ENCODE measurements at regions of chr11 and their contacts with region 1.

Region 1: GRCh38 chr11:118689851-118690552 is 10.6 kb upstream of the TREH start:
- DNase-seq: peak; percentile 93 to 95
- ATAC-seq: peak; percentile 94 to 98 (median 96)
- H3K4me3 ChIP-seq: peak overlapping the region in 9 of 10 donors; percentile 29 to 55 (median 49)
- H3K27ac ChIP-seq: peak overlapping the region in 9 of 10 donors; percentile 14 to 81 (median 75)
- H3K4me1 ChIP-seq: peaks cover 0 to 29% (median 8%) of the 10 kb centered on the region in 9 donors
- H3K27me3 ChIP-seq: no peaks in the 10 kb centered on the region
- CTCF ChIP-seq: peak; percentile 70 to 91 (median 84)

Region 2: DNA sequence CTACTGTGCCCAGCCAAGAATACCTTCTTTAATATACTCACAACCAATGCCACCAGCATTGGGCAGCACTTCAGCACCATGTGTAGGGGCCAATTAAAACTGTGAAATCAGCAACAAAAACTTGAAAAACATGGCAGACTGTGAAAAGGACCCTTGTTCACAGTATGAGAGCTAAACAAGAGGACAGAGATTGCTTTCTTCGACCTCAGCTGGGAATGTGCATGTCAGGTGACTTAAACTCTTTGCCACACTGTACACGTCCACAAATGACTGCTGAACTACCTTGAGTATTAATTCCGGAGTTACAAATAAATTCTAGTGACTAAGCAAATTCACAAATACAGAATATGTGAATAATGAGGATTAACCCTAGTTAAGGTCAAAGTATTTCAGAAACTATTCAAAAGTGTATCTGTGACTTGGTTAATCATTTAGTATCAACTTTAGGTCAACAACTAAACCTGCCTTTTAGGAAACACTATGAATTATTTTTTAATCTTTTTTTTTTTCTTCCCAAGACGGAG is 67.9 kb after region 1 on chr11:
- intact Hi-C with region 1: no loop called
- DNase-seq: no peak
- ATAC-seq: no peak
- H3K4me3 ChIP-seq: no peak overlapping the region
- H3K27ac ChIP-seq: peak overlapping the region in 1 of 10 donors; percentile 11
- H3K4me1 ChIP-seq: peaks cover 0 to 6% (median under 1%) of the 10 kb centered on the region in 9 donors
- H3K27me3 ChIP-seq: no peaks in the 10 kb centered on the region
- CTCF ChIP-seq: no peak

Region 3: GRCh38 chr11:118783724-118784495 is 93.9 kb after region 1 on chr11:
- intact Hi-C with region 1: loop called in 3 of 10 experiments (anchors 5 to 10 kb)
- DNase-seq: peak; percentile 47 to 57
- ATAC-seq: peak; percentile 34 to 87 (median 70)
- H3K4me3 ChIP-seq: no peak overlapping the region
- H3K27ac ChIP-seq: peak overlapping the region in 2 of 10 donors; percentile 4 to 25
- H3K4me1 ChIP-seq: peaks cover 5 to 91% (median 80%) of the 10 kb centered on the region in 9 donors
- H3K27me3 ChIP-seq: no peaks in the 10 kb centered on the region
- CTCF ChIP-seq: no peak

Region 4: DNA sequence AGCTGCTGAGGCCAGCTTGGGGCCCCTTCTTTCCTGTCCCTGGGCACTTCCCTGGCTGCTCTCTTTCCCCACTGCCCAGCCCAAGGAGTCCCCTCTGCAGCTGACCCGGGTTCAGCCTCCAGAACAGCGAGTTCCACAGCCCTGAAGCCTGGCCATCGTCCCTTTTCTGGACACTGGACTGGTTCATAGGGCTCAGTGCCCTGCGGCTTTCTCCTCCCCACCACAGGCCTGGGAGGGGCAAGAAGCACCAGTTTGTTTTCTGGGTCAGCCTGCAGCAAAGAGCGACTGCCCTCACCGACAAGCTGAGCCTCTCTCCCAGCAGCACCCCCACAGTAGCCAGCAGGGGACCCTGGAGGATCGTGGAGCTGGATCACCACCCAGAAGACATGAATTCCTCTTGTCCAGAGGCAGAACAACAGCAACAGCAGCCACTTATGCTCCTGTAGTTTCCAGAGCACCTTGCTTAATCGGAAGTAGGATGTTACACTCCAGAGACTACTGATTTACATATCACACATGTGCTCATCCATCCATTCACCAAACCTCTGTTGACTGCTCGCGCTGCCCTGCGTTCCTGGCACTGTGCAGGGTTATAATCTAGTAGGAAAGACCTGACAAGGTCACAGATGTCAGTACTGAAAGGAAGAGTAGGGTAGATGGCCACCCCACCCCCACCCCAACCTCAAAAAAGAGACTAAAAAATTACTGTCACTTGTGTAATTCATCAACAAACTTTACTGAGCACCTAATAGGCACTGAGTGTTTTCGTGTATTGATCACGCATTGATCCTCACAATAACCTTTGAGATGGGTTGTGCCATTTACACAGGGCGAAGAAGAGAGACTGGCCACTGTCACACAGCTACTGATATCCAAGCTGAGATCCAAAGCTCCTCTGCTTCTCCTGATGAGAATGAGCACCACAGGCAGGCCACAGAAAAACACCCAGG is 180.7 kb after region 1 on chr11:
- intact Hi-C with region 1: loop called in 2 of 10 experiments (anchors 10 kb)
- DNase-seq: peak; percentile 33 to 40
- ATAC-seq: peak in 6 of 8 donors; percentile 62 to 89 (median 78)
- H3K4me3 ChIP-seq: peak overlapping the region in 7 of 10 donors; percentile 12 to 39 (median 33)
- H3K27ac ChIP-seq: peak overlapping the region; percentile 44 to 90 (median 79)
- H3K4me1 ChIP-seq: peaks cover 0 to 27% (median 14%) of the 10 kb centered on the region in 9 donors
- H3K27me3 ChIP-seq: no peaks in the 10 kb centered on the region
- CTCF ChIP-seq: peak in 5 of 9 donors; percentile 5 to 29 (median 24)

Region 5: DNA sequence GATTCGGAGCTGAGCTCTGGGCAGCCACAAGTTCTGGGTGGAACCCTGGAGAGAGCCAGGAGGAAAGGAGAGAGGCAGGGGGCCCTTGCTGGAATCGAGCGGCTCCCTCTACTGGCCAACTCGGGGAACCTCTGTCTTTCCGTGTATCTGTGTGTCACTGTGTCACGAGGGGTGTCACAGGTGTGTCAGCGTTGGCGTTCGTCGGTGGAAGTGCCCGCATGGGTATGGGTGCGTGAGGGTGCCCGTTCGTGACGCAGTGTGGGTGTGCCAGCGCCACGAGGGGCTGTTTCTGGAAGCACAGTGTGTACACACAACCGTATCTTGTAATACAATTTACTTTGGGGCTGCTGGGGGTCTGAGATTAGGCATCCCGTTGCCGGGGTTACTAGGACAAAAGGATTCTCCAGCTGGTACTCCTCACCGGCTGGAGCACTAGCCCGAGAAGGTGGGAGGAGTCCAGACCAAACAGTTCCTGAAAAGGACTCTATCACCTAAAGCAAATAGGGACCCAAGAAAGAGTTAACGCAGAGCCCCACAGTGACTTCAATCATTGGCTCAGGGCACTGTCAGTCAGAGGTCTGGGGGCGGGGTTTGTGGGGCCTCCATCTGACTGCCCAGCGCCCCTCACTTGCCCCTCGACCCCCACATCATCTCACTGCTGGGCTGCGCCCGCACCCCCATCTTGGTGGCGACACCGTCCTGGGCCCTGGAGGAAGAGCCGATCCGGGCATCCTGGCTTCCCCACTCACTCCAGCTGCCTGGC is 238.3 kb after region 1 on chr11:
- intact Hi-C with region 1: loop called in 3 of 10 experiments (anchors 1 to 2 kb)
- DNase-seq: peak; percentile 89 to 94
- ATAC-seq: peak; percentile 73 to 86 (median 81)
- H3K4me3 ChIP-seq: peak overlapping the region; percentile 55 to 90 (median 76)
- H3K27ac ChIP-seq: peak overlapping the region; percentile 94 to 100 (median 97)
- H3K4me1 ChIP-seq: peaks cover 12 to 49% (median 37%) of the 10 kb centered on the region in 9 donors
- H3K27me3 ChIP-seq: no peaks in the 10 kb centered on the region
- CTCF ChIP-seq: peak; percentile 83 to 97 (median 94)

Region 6: DNA sequence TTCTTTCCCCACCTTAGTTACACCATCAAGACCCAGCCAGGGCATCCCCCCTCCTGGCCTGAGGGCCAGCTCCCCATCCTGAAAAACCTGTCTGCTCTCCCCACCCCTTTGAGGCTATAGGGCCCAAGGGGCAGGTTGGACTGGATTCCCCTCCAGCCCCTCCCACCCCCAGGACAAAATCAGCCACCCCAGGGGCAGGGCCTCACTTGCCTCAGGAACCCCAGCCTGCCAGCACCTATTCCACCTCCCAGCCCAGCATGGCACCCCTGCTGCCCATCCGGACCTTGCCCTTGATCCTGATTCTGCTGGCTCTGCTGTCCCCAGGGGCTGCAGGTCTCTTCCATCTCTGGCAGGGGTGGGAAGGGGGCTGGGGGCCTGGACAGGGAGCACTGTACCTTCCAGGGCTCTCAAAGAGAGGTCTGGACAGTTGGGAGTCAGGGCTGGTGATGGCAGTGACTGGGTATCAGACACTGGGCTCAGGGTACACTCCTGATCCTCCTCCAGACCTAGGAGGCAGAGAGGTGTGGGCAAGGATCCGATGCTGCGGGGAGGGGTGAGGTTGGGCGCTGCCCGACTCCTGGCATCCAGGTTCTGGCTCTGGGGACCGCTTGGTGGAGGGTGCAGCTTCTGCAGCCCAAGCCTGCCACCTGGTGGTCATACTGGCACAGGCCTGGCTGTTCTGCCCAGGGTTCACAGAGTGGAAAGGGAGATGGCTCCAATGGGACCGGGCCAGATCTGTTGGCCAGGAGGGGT is 266.3 kb after region 1 on chr11 and contains the start of gene UPK2:
- intact Hi-C with region 1: loop called (anchors 1 to 10 kb)
- DNase-seq: peak; percentile 85 to 89
- ATAC-seq: peak; percentile 95 to 98 (median 96)
- H3K4me3 ChIP-seq: no peak within 1 kb of the TSS
- H3K27ac ChIP-seq: no peak within 1 kb of the TSS
- H3K4me1 ChIP-seq: peaks cover 0 to 5% (median 0%) of the 10 kb centered on the region in 9 donors
- H3K27me3 ChIP-seq: peaks cover 0 to 20% (median 4%) of the 10 kb centered on the region in 7 donors
- CTCF ChIP-seq: peak; percentile 88 to 98 (median 95)
- total RNA-seq, gene UPK2: not detected